H1 (cell line): ENCODE measurements at regions of chr1 and their contacts with region 1.

Region 1: DNA sequence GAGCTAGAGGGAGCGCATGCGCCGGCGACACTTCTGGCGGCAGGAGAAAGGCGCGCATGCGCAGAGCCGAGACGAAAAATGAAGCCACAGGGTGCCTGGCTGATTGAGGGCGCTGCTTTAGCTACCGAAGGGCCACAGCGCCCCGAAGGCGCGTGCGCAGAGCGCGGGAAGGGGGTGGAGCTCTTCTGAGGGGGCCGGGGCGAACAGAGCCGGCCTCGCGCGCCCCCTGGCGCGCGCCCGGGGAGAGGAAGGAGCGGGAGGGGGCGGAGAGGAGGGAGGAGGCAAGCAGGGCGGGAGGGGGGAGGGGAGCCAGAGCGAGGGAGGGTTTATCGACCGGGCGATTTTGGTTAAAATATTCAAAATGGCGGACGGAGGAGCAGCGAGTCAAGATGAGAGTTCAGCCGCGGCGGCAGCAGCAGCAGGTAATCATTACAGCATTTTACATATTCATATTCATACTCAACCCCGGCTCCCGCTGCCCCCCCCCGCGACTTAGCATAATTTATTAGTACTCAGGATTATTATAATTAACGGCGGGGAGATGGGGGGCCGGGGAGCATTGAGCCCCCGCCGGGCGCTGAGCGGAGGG is at the start of gene POU2F1:
- DNase-seq: peak; percentile 97 to 99
- H3K4me3 ChIP-seq: peak within 1 kb of the TSS; percentile 69 to 84 (median 74)
- H3K27ac ChIP-seq: peak within 1 kb of the TSS; percentile 99
- H3K4me1 ChIP-seq: peaks cover 0 to 18% (median 0%) of the 10 kb centered on the region in 4 experiments; a peak in 4 of 7 replicates
- H3K27me3 ChIP-seq: no peaks in the 10 kb centered on the region
- CTCF ChIP-seq: peak; percentile 41 to 70 (median 53)
- EP300 ChIP-seq: no peak
- POLR2A ChIP-seq: peak; percentile 71 to 89; a peak in 2 of 3 replicates
- RAD21 ChIP-seq: peak; percentile 44 to 70
- total RNA-seq, gene POU2F1: 55.1 and 57.2 TPM in 2 replicates

Region 2: DNA sequence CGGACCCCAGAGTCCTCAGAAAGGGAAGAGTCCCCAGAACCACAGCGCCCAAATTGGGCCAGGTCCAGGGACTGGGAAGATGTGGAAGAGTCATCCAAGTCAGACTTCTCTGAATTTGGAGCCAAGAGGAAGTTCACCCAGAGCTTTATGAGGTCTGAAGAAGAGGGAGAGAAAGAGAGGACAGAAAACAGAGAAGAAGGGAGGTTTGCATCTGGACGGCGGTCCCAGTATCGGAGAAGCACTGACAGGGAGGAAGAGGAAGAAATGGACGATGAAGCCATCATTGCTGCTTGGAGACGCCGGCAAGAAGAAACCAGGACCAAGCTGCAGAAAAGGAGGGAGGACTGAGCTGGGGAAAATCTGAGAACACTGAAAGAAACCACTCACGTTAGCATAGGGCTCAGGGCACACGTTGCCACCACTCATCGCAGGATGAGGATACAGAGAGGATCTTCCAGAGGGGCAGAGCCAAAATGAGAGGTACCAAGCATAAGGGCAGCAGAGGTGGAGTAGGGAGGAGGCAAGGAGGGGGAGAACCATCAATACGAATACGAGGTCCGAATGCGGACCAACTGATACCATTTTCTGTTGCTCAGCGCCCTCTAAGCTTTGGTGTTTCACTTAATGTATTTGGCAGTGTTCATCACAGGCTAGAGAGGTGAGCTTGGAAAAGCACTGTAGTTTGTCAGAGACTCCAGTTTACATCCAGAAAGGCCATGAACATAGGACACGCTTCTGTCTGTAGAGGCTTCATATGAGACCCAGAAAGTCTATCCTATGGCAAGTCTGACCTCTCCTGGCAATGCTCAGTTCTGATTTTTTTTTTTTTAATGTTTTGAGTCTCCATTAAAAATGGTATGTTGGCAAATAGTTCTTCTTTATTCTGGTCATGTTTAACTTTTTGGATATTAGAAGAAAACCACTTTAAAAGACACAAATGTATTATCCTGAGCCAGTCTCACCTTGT is 92.1 kb before region 1 on chr1:
- CTCF ChIA-PET with region 1: no interaction called
- POLR2A ChIA-PET with region 1: interaction called, 13 read pairs
- DNase-seq: peak in 1 of 2 experiments; percentile 20
- H3K4me3 ChIP-seq: no peak overlapping the region
- H3K27ac ChIP-seq: no peak overlapping the region
- H3K4me1 ChIP-seq: no peaks in the 10 kb centered on the region
- H3K27me3 ChIP-seq: no peaks in the 10 kb centered on the region
- CTCF ChIP-seq: no peak
- EP300 ChIP-seq: no peak
- POLR2A ChIP-seq: no peak
- RAD21 ChIP-seq: peak; percentile 23 to 39

Region 3: GRCh38 chr1:167148421-167148820 is 72.2 kb before region 1 on chr1:
- CTCF ChIA-PET with region 1: interaction called, 3 read pairs
- POLR2A ChIA-PET with region 1: interaction called, 12 read pairs
- DNase-seq: no peak
- H3K4me3 ChIP-seq: peak overlapping the region in 1 of 4 experiments; percentile 15; a peak in 3 of 8 replicates
- H3K27ac ChIP-seq: no peak overlapping the region
- H3K4me1 ChIP-seq: peaks cover 0 to 4% (median 1%) of the 10 kb centered on the region in 4 experiments; a peak in 2 of 7 replicates
- H3K27me3 ChIP-seq: no peaks in the 10 kb centered on the region
- CTCF ChIP-seq: no peak
- EP300 ChIP-seq: no peak
- POLR2A ChIP-seq: no peak
- RAD21 ChIP-seq: no peak

Region 4: DNA sequence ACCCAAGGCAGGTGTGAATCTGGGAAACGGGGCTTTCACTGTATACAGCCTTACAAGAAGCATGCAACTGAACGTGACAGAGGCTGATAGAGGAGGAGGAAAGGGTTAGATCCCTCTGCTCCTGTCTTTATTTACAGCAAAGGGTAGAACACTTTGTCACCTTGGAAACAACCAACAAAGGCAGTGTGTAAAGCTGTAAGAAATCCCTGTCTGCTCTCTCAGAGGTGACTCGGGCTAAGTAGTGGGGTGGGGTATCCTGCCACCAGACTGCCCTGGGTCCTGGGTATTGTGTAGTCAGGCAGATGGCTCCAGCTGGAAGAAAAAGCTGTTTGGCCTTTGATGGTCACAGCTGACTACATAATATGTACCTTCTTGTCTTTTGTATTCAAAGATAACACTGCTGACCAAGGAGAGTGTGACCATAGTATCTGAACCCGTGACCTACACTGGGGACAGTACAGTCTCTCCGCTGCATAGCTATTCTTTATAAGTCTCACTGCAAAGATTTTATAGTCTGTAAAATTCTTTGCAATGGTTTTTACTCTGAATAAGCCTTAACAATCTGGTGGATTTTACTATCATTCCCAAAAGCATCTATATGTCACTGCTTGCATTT is 22.0 kb before region 1 on chr1:
- CTCF ChIA-PET with region 1: interaction called, 11 read pairs
- POLR2A ChIA-PET with region 1: interaction called, 22 read pairs
- DNase-seq: no peak
- H3K4me3 ChIP-seq: no peak overlapping the region
- H3K27ac ChIP-seq: no peak overlapping the region
- H3K4me1 ChIP-seq: no peaks in the 10 kb centered on the region; a peak in 3 of 7 replicates
- H3K27me3 ChIP-seq: no peaks in the 10 kb centered on the region
- CTCF ChIP-seq: no peak
- EP300 ChIP-seq: no peak
- POLR2A ChIP-seq: no peak
- RAD21 ChIP-seq: no peak

Region 5: GRCh38 chr1:167258858-167259257 is 38.2 kb after region 1 on chr1:
- CTCF ChIA-PET with region 1: interaction called, 3 read pairs
- POLR2A ChIA-PET with region 1: interaction called, 26 read pairs
- DNase-seq: no peak
- H3K4me3 ChIP-seq: no peak overlapping the region
- H3K27ac ChIP-seq: no peak overlapping the region
- H3K4me1 ChIP-seq: no peaks in the 10 kb centered on the region; a peak in 1 of 7 replicates
- H3K27me3 ChIP-seq: no peaks in the 10 kb centered on the region
- CTCF ChIP-seq: no peak
- EP300 ChIP-seq: no peak
- POLR2A ChIP-seq: no peak
- RAD21 ChIP-seq: no peak

Region 6: GRCh38 chr1:167312871-167313270 is 92.2 kb after region 1 on chr1:
- CTCF ChIA-PET with region 1: no interaction called
- POLR2A ChIA-PET with region 1: no interaction called
- DNase-seq: no peak
- H3K4me3 ChIP-seq: no peak overlapping the region
- H3K27ac ChIP-seq: no peak overlapping the region
- H3K4me1 ChIP-seq: no peaks in the 10 kb centered on the region
- H3K27me3 ChIP-seq: no peaks in the 10 kb centered on the region
- CTCF ChIP-seq: no peak
- EP300 ChIP-seq: no peak
- POLR2A ChIP-seq: no peak
- RAD21 ChIP-seq: no peak

Region 7: DNA sequence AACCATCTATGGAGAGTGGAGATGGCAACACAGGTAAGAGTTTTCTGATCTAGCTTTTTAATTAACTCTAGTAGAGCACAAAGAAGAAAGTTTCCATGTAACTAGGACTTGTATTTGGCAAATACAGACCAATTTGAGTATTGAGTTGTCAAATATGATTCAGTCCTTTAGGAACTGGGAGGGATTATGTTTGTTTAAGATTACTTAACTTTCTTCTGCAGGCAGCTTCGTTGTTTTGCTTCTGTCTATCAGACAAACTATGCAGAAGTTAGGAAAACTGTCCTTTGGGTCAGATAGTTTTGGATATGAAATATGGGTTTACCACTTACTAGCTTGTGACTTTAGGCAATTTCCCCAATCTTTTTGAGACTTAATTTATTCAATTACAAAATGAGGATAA is 111.9 kb after region 1 on chr1:
- CTCF ChIA-PET with region 1: no interaction called
- POLR2A ChIA-PET with region 1: no interaction called
- DNase-seq: no peak
- H3K4me3 ChIP-seq: no peak overlapping the region
- H3K27ac ChIP-seq: no peak overlapping the region
- H3K4me1 ChIP-seq: peaks cover 0 to 10% (median 2%) of the 10 kb centered on the region in 4 experiments; a peak in 3 of 7 replicates
- H3K27me3 ChIP-seq: no peaks in the 10 kb centered on the region
- CTCF ChIP-seq: no peak
- EP300 ChIP-seq: no peak
- POLR2A ChIP-seq: no peak
- RAD21 ChIP-seq: no peak

Region 8: DNA sequence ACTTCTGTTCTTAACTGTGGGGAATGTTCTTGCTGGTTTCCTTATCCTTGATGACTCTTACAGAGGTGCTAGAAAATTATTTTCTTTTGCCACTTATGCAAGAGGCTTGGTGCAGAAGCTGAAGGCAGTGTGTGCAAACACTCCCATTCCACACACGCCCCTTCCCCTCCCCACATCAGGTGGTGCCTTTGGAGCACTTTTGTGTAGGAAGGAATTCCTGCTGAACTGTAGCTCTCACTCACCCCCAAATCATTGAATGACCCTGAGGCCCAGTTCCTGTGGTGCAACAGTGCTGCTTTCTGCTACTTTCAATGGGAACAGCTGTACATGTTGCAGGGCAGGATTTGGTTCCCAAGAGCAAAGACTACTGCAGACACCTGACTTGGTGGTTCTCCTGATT is 195.9 kb after region 1 on chr1:
- CTCF ChIA-PET with region 1: no interaction called
- POLR2A ChIA-PET with region 1: no interaction called
- DNase-seq: no peak
- H3K4me3 ChIP-seq: no peak overlapping the region
- H3K27ac ChIP-seq: no peak overlapping the region
- H3K4me1 ChIP-seq: no peaks in the 10 kb centered on the region; a peak in 2 of 7 replicates
- H3K27me3 ChIP-seq: no peaks in the 10 kb centered on the region
- CTCF ChIP-seq: no peak
- EP300 ChIP-seq: no peak
- POLR2A ChIP-seq: no peak
- RAD21 ChIP-seq: no peak